A673 (cell line): ENCODE measurements at regions of chr9 and their contacts with region 1.

Region 1: GRCh38 chr9:112333639-112334431 is 416 bp upstream of the PTBP3 start:
- DNase-seq: peak; percentile 98
- H3K4me3 ChIP-seq: peak overlapping the region; percentile 92
- H3K27ac ChIP-seq: peak overlapping the region; percentile 85
- H3K4me1 ChIP-seq: peaks cover 7% of the 10 kb centered on the region
- H3K27me3 ChIP-seq: no peaks in the 10 kb centered on the region
- CTCF ChIP-seq: peak; percentile 58

Region 2: GRCh38 chr9:112112941-112113681 is 220.7 kb before region 1 on chr9:
- CTCF ChIA-PET with region 1: interaction called, 12 read pairs
- POLR2A ChIA-PET with region 1: no interaction called
- intact Hi-C with region 1: loop called (anchors 5 kb)
- DNase-seq: peak; percentile 30
- H3K4me3 ChIP-seq: no peak overlapping the region
- H3K27ac ChIP-seq: no peak overlapping the region
- H3K4me1 ChIP-seq: no peaks in the 10 kb centered on the region
- H3K27me3 ChIP-seq: no peaks in the 10 kb centered on the region
- CTCF ChIP-seq: peak; percentile 46; the same call in 1 of the 2 replicates

Region 3: DNA sequence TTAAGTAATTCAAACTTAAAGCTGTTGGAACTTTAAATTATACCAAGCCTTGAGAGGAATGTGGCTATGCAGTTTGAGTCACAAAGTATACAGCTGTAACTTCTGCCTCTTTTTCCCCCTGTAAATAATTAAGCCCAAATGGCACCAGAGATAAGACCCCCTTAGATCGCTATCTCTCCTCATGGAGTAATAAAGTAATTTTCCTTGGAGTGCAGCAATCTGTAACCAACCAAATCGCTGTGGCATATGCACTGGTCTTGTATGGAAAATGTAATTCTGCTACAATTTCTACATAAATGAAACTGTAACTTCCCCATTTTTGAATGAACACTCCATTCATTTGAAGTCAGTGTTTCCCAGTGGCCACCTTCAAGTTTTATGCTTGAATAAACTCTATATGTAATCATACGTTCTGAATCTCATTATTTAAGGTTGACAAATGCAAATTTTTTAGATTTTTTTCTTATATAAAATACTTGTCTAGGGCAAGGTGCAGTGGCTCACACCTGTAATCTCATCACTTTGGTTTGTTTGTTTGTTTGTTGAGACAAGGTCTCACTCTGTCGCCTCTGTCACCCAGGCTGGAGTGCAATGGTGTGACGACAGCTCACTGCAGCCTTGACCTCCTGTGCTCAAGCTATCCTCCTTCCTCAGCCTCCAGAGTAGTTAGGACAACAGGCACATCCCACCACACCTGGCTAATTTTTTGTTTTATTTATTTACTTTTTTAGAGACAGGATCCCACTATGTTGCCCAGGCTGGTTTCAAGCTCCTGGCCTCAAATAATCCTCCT is 171.0 kb before region 1 on chr9:
- CTCF ChIA-PET with region 1: no interaction called
- POLR2A ChIA-PET with region 1: no interaction called
- intact Hi-C with region 1: no loop called
- DNase-seq: no peak
- H3K4me3 ChIP-seq: no peak overlapping the region
- H3K27ac ChIP-seq: no peak overlapping the region
- H3K4me1 ChIP-seq: no peaks in the 10 kb centered on the region
- H3K27me3 ChIP-seq: no peaks in the 10 kb centered on the region
- CTCF ChIP-seq: no peak

Region 4: GRCh38 chr9:112283582-112284253 is 50.1 kb before region 1 on chr9:
- CTCF ChIA-PET with region 1: interaction called, 9 read pairs
- POLR2A ChIA-PET with region 1: no interaction called
- intact Hi-C with region 1: loop called (anchors 2 kb)
- DNase-seq: no peak
- H3K4me3 ChIP-seq: no peak overlapping the region
- H3K27ac ChIP-seq: no peak overlapping the region
- H3K4me1 ChIP-seq: no peaks in the 10 kb centered on the region
- H3K27me3 ChIP-seq: no peaks in the 10 kb centered on the region
- CTCF ChIP-seq: no peak

Region 5: GRCh38 chr9:112379177-112380101 is 45.6 kb after region 1 on chr9:
- CTCF ChIA-PET with region 1: no interaction called
- POLR2A ChIA-PET with region 1: no interaction called
- intact Hi-C with region 1: loop called (anchors 5 kb)
- DNase-seq: peak; percentile 99
- H3K4me3 ChIP-seq: peak overlapping the region; percentile 88
- H3K27ac ChIP-seq: peak overlapping the region; percentile 96
- H3K4me1 ChIP-seq: peaks cover 5% of the 10 kb centered on the region
- H3K27me3 ChIP-seq: no peaks in the 10 kb centered on the region
- CTCF ChIP-seq: no peak

Region 6: DNA sequence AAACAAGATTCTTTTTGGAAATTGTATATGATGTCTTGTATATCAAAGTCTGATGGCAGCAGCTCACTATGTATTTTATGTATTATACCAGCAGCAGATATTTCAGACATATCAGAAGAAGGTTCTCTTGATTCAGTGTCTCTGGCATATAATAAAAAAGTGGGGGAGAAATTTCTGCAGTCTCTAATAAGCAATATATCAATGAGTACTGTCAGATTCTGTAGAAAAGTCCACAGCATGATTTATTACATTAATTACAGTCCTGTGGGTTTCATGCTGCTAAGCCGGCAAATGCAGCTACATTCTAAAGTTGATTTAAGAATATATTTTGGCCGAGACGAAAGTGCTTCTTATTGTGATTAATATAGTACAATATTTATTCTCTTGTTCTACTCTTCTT is 265.9 kb after region 1 on chr9:
- CTCF ChIA-PET with region 1: interaction called, 14 read pairs
- POLR2A ChIA-PET with region 1: no interaction called
- intact Hi-C with region 1: no loop called
- DNase-seq: peak; percentile 32
- H3K4me3 ChIP-seq: no peak overlapping the region
- H3K27ac ChIP-seq: no peak overlapping the region
- H3K4me1 ChIP-seq: peaks cover 27% of the 10 kb centered on the region
- H3K27me3 ChIP-seq: no peaks in the 10 kb centered on the region
- CTCF ChIP-seq: no peak